Right ventricle myocardium inferior (tissue), 1 donor: ENCODE measurements at regions of chr7 and their contacts with region 1.

Region 1: GRCh38 chr7:36291387-36292316 is 98.0 kb upstream of the ANLN start:
- DNase-seq: peak; percentile 90
- ATAC-seq: peak; percentile 93

Region 2: DNA sequence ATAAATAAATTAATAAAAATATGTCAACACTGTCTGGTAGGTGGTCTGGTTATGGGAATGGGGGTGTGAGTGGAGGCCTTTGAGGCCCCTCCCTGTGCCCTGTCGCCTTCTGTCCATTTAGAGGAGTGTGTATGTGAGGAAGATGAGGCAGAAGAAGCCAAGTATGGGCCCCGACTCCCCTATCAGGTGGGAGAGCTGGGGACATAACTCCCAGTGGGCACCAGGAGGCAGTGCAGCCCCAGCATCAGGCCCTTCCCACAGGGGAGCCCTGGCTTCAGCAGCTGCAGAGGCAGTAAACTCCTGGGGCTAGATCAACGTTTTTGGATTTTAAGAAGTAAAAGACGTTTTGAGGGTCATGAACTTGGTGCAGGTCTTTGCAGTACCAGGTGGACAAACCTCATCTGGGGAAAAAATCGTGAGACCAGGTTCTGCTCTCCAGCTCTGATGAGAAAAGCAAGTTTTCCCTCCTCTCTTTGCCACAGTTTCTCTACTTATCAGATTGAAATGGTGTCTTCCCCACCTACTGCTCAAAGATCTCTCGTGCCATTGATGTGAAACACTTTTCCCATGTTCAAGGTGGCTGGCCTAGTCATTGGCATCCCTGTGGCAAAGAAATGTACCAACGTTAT is 306.4 kb before region 1 on chr7:
- intact Hi-C with region 1: loop called (anchors 1 kb)
- DNase-seq: peak; percentile 93
- ATAC-seq: peak; percentile 93

Region 3: DNA sequence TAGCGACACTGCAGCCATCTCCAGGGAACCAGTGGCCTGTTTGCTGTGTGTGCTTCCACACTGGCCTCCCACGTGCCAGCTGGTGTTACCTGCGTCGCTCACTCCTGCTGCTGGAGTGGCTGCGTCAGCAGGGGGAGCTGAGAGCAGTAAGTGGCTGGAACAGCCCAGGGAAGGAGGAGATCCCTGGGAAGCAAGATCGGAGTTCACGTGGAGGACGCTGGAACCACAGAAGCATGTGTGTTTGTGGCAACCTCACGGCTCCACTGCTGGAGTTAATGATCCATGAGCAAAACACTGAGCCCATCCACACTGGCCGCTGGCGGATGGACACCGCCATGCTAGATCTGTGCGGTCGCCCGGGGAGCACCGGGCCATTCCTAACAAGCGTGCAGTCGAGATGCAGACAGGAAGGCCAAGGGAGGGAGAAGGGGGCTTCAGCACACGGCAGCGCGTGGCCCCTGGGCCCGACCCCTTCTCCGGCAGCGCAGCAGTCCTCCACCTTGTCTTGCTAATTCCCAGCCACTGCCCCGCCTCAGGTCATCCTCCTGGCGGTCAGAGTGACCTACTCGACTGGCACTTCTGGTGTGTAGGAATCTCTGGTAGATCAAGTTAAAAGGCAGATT is 207.1 kb before region 1 on chr7:
- intact Hi-C with region 1: loop called (anchors 5 kb)
- DNase-seq: no peak
- ATAC-seq: peak; percentile 69

Region 4: GRCh38 chr7:36227223-36227622 is 64.4 kb before region 1 on chr7:
- intact Hi-C with region 1: loop called (anchors 5 kb)
- DNase-seq: no peak
- ATAC-seq: peak; percentile 62

Region 5: GRCh38 chr7:36315309-36316133 is 23.9 kb after region 1 on chr7:
- intact Hi-C with region 1: loop called (anchors 1 kb)
- DNase-seq: no peak
- ATAC-seq: no peak

Region 6: GRCh38 chr7:36600869-36601530 is 309.3 kb after region 1 on chr7:
- intact Hi-C with region 1: no loop called
- DNase-seq: no peak
- ATAC-seq: no peak